Tibial artery (tissue), 4 donors: ENCODE measurements at regions of chr10 and their contacts with region 1.

Region 1: DNA sequence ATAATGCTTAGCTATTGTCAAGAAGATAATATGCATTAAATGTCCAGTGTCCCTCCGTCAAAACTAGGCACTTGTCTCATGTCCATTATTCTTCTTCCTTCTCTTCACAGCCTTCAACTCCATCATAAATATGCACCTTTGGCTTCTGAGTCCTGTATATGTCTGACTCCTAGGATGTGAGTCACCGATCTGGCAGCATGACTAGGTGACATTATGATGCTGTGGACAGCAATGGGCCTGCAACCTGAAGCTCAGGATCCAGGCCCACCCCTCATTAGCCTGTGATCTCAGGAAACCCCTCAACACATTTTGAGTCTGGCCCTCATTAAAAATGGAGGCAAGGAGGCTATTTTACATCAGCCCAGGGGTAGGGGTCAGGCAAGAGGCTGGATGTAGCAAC is 362.5 kb upstream of the ZMIZ1 start:
- DNase-seq: no peak
- H3K4me3 ChIP-seq: no peak overlapping the region
- H3K27ac ChIP-seq: no peak overlapping the region
- H3K4me1 ChIP-seq: no peaks in the 10 kb centered on the region
- H3K27me3 ChIP-seq: no peaks in the 10 kb centered on the region
- CTCF ChIP-seq: no peak

Region 2: DNA sequence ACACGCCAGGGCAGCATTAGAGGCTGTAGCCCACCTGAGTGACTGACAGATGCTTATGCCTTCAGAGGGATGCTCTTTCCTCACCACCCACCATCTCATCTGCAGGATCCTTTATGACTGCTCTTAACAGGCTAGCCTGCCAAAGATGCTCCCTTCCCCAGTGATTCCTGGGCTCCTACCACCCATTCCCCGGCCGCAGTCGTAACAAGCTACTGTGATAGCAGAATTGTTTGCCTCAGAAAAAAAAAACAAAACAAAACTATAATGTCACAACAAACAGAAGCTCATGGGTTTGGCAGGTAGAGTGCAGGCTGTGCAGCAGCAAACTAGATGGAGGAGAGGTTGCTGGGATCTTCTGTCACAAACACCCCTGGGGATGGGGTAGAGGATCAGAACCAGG is 18.6 kb after region 1 on chr10:
- intact Hi-C with region 1: loop called (anchors 1 kb)
- DNase-seq: no peak
- H3K4me3 ChIP-seq: no peak overlapping the region
- H3K27ac ChIP-seq: no peak overlapping the region
- H3K4me1 ChIP-seq: peaks cover 0 to 11% (median 3%) of the 10 kb centered on the region in 4 donors
- H3K27me3 ChIP-seq: no peaks in the 10 kb centered on the region
- CTCF ChIP-seq: no peak